ENCODE measurements at regions of chr6 and their contacts with region 1.

Region 1: DNA sequence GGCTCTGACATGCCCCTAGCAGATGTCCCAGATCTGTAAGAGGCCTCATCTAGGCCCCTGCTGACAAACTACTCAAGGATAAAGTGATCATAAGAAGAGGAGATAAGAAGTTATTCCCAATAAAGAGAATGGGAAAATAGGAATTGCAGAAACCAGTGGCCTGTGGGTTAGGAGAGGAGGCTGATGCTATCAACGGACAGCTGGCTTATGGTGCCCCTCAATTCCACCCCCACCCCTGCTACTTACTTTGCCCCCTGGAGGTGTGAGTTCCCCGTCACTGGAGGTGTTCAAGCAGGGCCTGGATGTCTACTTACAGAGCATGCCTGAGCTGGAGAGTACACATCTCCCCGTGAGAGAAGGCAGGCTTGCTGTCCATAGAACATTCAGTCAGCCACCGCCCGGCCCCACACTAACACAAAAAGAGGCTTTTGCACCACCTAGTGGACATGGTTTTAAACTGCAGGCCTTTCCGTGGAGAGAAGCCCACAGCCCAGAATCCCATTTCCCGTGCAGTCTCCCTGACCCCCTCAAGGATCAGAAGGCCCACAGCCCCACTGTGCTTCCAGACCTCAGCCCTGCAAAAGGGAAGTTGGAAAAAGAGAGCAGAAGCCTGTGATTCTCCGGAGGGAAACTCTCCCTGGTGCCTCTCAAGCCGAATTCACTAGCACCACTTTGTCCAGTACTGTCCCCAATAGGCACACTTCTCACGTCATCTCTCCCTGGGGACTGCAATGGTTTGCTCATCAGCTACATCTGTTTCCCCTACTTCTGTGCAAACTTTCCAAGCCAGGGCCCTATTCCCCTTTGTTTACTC is 23.8 kb upstream of the BNIP5 start:
- DNase-seq: peak; percentile 45
- ATAC-seq: peak; percentile 89
- H3K4me3 Mint-ChIP-seq: no peak overlapping the region
- H3K27ac Mint-ChIP-seq: no peak overlapping the region
- H3K4me1 Mint-ChIP-seq: peaks cover 30% of the 10 kb centered on the region
- H3K27me3 Mint-ChIP-seq: peaks cover 2% of the 10 kb centered on the region
- CTCF ChIP-seq: no peak

Region 2: GRCh38 chr6:35522660-35523658 is 837.5 kb before region 1 on chr6:
- CTCF ChIA-PET with region 1: no interaction called
- POLR2A ChIA-PET with region 1: no interaction called
- intact Hi-C with region 1: loop called (anchors 2 kb)
- DNase-seq: peak; percentile 54
- ATAC-seq: peak; percentile 96
- H3K4me3 Mint-ChIP-seq: peak overlapping the region; percentile 69
- H3K27ac Mint-ChIP-seq: no peak overlapping the region
- H3K4me1 Mint-ChIP-seq: peaks cover 8% of the 10 kb centered on the region
- H3K27me3 Mint-ChIP-seq: peaks cover 3% of the 10 kb centered on the region
- CTCF ChIP-seq: peak; percentile 98

Region 3: GRCh38 chr6:36123257-36124139 is 236.9 kb before region 1 on chr6:
- CTCF ChIA-PET with region 1: interaction called, 4 read pairs
- POLR2A ChIA-PET with region 1: interaction called, 3 read pairs
- intact Hi-C with region 1: loop called (anchors 1 kb)
- DNase-seq: peak; percentile 72
- ATAC-seq: peak; percentile 73
- H3K4me3 Mint-ChIP-seq: peak overlapping the region; percentile 41
- H3K27ac Mint-ChIP-seq: peak overlapping the region; percentile 86
- H3K4me1 Mint-ChIP-seq: peaks cover 73% of the 10 kb centered on the region
- H3K27me3 Mint-ChIP-seq: no peaks in the 10 kb centered on the region
- CTCF ChIP-seq: no peak

Region 4: DNA sequence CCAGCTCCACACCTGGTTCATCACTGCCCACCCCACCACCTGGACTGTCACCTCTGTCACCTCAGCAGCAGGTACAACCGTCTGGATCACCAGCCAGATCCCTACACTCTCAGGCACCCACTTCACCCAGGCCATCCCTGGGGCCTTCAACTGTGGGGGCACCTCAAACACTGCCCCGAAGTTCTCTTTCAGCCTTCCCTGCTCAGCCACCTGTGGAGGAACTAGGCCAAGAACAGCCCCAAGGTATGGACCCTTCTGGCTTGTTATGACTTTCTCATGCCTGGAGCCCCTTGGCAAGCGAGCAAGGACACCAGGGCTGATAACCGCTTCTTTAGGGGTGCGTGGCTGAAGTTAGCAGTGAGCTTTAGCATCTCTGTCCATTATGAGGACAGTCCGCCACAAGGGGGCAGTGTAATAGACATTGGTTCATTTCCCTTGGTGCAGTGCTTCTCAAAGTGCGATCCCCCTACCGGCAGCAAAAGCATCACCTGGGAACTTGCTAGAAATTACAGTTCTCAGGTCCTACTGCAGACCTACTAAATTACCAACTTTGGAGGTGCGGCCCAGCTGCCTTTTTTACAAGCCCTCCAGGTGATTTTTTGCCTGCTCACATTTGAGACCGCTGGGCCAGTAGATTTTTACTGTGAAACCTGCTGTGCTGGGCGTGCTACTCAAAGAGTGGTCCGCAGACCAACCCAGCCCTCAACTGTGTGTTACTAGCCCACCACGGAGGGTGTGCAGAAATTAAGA is 58.0 kb before region 1 on chr6:
- CTCF ChIA-PET with region 1: interaction called, 91 read pairs
- POLR2A ChIA-PET with region 1: interaction called, 3 read pairs
- intact Hi-C with region 1: loop called (anchors 1 kb)
- DNase-seq: peak; percentile 65
- ATAC-seq: peak; percentile 99
- H3K4me3 Mint-ChIP-seq: no peak overlapping the region
- H3K27ac Mint-ChIP-seq: no peak overlapping the region
- H3K4me1 Mint-ChIP-seq: peaks cover 1% of the 10 kb centered on the region
- H3K27me3 Mint-ChIP-seq: peaks cover 21% of the 10 kb centered on the region
- CTCF ChIP-seq: peak; percentile 82

Region 5: DNA sequence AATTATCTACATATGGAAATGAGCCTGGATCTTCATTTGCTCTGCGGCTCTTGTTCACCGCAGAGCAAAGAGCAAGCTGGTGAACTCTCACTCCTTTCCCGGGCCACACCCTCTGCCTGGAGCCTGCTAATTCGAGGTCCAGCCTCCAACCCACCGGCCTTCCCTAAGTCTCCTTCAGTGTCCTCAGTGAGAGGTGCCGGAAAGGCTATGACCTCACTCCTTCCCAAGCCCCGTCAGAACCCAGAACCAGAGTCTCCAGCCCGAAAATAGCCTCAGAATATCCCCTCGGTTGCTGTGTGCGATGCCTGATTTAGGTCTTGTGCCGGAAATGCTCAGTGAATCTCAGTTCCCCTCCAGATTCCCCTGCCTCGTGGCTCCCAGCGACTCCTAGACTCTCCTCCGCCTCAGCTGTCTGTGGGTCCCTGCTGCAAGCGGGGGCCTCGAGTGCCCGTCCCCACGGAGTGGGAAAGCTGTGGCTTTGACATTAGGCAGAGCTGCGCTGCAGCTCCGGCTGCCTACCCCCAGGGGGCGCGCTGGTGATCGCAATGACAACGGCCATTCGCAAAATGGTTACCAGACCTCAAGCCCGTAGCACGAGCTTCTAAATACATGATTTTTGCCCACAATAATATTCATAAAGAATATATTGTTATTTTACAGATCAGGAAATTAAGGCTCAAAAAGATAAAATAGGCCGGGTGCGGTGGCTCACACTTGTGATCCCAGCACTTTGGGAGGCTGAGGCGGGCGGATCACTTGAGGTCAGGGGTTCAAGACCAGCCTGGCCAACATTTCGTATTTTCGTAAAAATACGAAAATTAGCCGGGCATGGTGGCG is 19.6 kb before region 1 on chr6:
- CTCF ChIA-PET with region 1: interaction called, 30 read pairs
- POLR2A ChIA-PET with region 1: interaction called, 3 read pairs
- intact Hi-C with region 1: loop called (anchors 1 kb)
- DNase-seq: peak; percentile 61
- ATAC-seq: peak; percentile 85
- H3K4me3 Mint-ChIP-seq: peak overlapping the region; percentile 68
- H3K27ac Mint-ChIP-seq: no peak overlapping the region
- H3K4me1 Mint-ChIP-seq: peaks cover 26% of the 10 kb centered on the region
- H3K27me3 Mint-ChIP-seq: peaks cover 6% of the 10 kb centered on the region
- CTCF ChIP-seq: peak; percentile 88

Region 6: DNA sequence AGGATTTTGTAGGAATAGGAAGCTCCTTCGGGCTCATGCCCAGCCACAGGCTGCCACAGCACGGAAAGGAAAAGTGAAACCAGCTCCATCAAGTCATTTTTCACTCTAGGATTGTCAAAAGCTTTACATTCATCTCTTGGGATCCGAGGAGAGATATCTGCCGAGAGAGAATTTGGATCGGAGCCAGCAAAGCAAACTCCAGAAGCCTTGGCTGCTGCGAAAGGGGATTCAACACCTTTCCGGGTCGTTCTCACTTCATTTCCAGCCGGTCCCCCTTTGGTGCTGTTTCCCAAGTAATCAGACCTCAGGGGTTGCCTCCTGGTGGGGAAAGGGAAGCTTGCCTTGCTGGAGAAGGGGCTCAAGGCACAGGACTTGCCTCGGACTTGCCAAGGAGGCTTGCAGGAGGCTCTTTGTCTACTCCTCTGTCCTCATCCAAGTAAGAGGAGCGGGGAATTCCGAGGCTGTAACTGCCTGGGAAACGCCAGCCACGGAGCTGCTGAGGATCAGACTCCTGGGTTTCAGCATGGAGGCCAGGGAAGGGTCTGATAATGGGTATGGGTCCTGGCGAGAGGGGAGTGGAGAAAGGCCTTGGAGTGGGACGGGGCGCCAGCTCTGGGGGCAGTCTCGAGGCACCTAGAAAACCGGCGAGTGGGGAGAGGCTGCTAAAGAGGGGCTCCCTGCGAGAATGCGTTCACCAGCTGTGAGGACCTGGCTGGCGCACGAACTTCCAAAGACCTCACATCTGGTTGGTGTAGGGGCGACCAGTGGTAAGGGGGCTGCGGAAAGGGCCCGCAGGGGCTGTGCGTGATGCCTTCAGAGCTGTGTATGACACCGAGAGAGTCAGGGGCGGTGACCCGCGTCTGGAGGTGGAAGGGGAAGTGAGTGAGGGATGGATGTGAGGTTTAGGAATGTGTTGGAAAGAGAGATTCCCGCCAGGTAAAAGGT is 26.3 kb after region 1 on chr6:
- CTCF ChIA-PET with region 1: no interaction called
- POLR2A ChIA-PET with region 1: no interaction called
- intact Hi-C with region 1: no loop called
- DNase-seq: peak; percentile 27
- ATAC-seq: peak; percentile 47
- H3K4me3 Mint-ChIP-seq: peak overlapping the region; percentile 79
- H3K27ac Mint-ChIP-seq: no peak overlapping the region
- H3K4me1 Mint-ChIP-seq: peaks cover 31% of the 10 kb centered on the region
- H3K27me3 Mint-ChIP-seq: peaks cover 35% of the 10 kb centered on the region
- CTCF ChIP-seq: no peak

Region 7: GRCh38 chr6:36820700-36821580 is 460.5 kb after region 1 on chr6:
- CTCF ChIA-PET with region 1: no interaction called
- POLR2A ChIA-PET with region 1: no interaction called
- intact Hi-C with region 1: no loop called
- DNase-seq: no peak
- ATAC-seq: no peak
- H3K4me3 Mint-ChIP-seq: no peak overlapping the region
- H3K27ac Mint-ChIP-seq: no peak overlapping the region
- H3K4me1 Mint-ChIP-seq: no peaks in the 10 kb centered on the region
- H3K27me3 Mint-ChIP-seq: peaks cover 8% of the 10 kb centered on the region
- CTCF ChIP-seq: no peak